HEK293 (cell line): ENCODE measurements at regions of chr7 and their contacts with region 1.

Region 1: DNA sequence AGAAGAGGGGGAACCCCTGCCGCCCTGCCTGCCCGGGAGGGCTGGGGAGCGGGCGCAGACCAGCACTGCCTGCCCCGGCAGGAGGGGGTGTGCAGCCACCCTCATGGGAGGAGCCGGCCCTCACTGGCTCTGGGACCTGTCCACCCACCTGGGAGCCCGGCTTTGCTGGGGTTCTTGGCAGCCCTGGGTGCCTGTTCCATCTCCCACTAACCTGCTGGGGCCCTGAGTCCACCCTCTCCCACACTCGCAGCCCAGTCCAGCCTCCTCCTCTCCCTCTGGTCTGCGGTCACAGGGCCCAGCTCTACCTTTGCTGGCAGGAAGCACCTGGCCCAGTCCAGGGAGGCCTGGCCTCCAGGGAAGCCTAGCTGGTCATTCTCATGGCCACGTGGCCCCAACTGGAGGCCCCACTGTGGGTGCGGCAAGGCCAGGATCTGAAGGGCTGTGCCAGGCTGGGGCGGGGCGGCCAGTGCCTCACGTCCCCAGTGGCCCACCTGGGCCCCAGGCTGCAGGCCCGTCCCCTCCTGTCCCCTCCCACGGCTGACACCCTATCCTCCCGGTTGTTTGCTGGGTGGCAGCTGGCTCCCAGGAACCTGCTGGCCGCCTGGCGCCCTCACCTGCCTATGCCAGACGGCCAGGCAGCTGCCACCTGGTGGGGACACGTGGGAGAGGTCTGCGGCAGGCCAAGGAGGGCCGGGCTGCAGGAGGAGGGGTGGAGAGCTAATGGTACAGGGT is at the start of gene TMEM184A:
- H3K4me3 ChIP-seq: no peak within 1 kb of the TSS
- H3K27ac ChIP-seq: no peak within 1 kb of the TSS; the same call in 1 of the 2 replicates
- H3K4me1 ChIP-seq: peaks cover 3% of the 10 kb centered on the region; the same call in 1 of the 2 replicates
- CTCF ChIP-seq: peak; percentile 90

Region 2: GRCh38 chr7:1144269-1144771 is 411.7 kb before region 1 on chr7:
- CTCF ChIA-PET with region 1: no interaction called
- POLR2A ChIA-PET with region 1: no interaction called
- H3K4me3 ChIP-seq: no peak overlapping the region
- H3K27ac ChIP-seq: no peak overlapping the region
- H3K4me1 ChIP-seq: no peaks in the 10 kb centered on the region
- CTCF ChIP-seq: no peak

Region 3: GRCh38 chr7:1236831-1237701 is 318.9 kb before region 1 on chr7:
- CTCF ChIA-PET with region 1: no interaction called
- POLR2A ChIA-PET with region 1: no interaction called
- H3K4me3 ChIP-seq: no peak overlapping the region
- H3K27ac ChIP-seq: no peak overlapping the region
- H3K4me1 ChIP-seq: no peaks in the 10 kb centered on the region
- CTCF ChIP-seq: no peak

Region 4: DNA sequence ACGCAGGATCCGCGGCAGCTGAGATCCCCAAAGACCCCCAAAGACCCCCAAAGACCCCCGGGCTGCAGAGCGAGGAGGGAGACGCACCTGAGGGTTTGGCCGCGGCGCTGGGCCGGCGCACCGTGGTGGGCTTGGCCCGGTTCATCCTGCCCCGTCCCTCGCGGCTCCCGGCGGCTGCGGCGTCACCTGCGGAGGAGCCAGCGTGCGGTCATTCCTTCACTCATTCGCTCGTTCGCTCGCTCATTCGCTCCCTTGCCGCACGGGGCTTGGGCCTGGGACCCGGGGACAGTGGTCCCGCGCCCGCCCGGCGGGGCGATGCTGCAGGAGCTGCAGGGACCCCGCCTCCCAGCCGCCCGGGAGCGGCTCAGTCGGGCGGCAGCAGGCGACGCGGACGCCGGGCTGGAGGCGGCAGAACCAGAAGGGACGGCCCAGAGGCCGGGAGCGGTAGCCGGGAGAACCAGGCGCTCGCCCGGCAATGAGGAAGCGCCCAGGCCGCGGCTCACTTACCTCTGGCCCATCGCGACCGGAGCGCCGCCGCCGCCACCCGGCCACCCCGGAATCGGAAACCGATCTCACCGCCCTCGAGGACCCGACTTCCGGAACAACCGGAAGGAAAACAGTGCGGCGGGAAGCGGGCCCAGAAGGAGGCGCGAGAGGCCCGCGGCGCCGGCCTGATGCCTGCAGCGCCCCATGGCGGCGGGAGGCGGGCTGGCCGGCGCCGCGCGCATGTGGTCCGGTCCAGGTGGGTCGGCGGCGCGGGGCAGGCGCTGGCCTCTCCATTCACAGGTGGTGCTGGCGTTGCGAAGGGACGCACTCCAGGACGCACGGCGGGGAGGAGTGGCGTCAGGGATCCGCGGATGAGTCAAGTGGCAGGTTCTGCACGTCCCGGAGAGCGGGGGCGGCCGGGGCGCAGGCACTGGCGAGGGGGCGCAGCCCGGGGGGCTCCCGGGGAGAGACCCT is 51.9 kb before region 1 on chr7 and contains the start of gene INTS1:
- CTCF ChIA-PET with region 1: interaction called, 10 read pairs
- POLR2A ChIA-PET with region 1: interaction called, 8 read pairs
- H3K4me3 ChIP-seq: peak within 1 kb of the TSS; percentile 89
- H3K27ac ChIP-seq: peak within 1 kb of the TSS; percentile 78; the same call in 1 of the 2 replicates
- H3K4me1 ChIP-seq: no peaks in the 10 kb centered on the region
- CTCF ChIP-seq: peak; percentile 50

Region 5: GRCh38 chr7:1532483-1533424 is 23.2 kb before region 1 on chr7:
- CTCF ChIA-PET with region 1: interaction called, 23 read pairs
- POLR2A ChIA-PET with region 1: interaction called, 40 read pairs
- H3K4me3 ChIP-seq: peak overlapping the region; percentile 71
- H3K27ac ChIP-seq: peak overlapping the region; percentile 62
- H3K4me1 ChIP-seq: peaks cover 26% of the 10 kb centered on the region
- CTCF ChIP-seq: no peak

Region 6: DNA sequence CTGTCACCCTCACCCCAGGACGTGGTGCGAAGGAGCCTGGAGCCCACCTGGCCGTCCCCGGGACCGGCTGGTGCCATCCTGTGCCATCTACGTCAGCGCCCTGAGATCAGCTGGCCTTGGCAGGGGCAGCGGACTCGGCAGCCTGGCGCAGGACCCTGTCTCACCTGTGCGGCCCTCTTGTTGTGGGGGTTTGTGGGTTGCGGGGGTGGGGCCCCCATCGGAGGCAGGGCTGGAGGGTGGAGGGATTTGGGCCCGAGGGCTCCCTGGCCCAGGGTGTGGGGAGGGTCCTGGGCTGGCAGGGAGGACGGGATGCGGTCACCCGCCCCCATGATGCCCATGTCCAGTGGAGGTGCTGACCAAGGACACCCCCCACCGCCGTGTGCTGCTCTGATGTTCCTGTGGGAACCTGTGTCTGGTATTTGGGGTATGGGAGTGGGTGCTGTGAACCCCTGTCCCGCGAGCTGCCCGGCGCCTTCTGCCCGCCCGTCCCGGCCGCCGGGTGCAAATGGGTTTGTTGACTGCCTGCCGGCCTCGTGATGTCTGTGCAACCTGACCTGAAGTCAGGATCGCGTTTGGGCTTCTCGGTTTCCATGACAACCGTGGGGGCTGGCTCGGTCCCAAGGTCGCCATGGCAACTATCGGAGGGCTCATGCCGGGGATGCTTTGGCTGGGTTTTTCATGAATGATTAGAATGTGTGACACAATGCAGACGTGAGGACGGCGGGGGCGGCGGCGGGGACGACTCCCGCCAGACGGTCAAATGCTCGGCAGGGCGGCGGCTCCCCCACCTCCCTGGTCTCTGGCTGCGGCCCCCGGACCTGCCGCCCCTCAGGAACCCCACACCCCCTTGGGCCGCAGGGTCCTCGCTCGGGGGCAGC is 18.2 kb before region 1 on chr7:
- CTCF ChIA-PET with region 1: interaction called, 23 read pairs
- POLR2A ChIA-PET with region 1: interaction called, 40 read pairs
- H3K4me3 ChIP-seq: peak overlapping the region; percentile 56
- H3K27ac ChIP-seq: peak overlapping the region; percentile 25; the same call in 1 of the 2 replicates
- H3K4me1 ChIP-seq: peaks cover 22% of the 10 kb centered on the region
- CTCF ChIP-seq: no peak

Region 7: GRCh38 chr7:1767524-1767923 is 211.5 kb after region 1 on chr7:
- CTCF ChIA-PET with region 1: no interaction called
- POLR2A ChIA-PET with region 1: no interaction called
- H3K4me3 ChIP-seq: no peak overlapping the region
- H3K27ac ChIP-seq: no peak overlapping the region
- H3K4me1 ChIP-seq: no peaks in the 10 kb centered on the region
- CTCF ChIP-seq: no peak

Region 8: DNA sequence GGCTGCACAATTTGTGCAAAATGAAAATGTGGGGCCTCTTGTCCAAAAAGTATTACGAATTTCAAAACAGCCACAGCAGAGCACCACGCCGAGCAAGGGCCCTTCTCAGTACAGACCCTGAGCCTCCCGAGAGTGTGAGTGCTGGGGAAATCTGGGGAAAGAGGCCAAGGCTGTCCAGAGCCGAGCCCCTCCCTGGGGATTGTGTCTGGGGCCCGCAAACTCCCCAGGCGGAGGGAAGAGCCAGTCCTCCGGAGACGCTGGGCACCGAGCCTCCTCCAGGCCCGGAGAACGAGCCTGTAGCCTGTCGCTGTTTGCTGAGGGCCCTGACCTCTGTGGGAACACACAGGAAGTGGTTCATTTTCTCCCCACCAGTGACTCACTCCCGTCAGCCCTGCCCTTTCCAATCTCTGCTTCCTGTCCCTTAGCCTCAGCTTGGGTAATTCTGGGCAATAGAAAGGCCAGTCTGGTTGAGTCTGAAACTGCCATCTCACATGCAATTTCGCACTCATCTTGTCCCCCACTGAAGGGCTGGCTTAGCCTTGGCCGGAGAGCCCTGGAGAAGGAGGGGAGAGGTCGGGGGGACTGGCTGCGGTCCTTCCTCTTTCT is 1307.6 kb after region 1 on chr7:
- CTCF ChIA-PET with region 1: no interaction called
- POLR2A ChIA-PET with region 1: no interaction called
- H3K4me3 ChIP-seq: no peak overlapping the region
- H3K27ac ChIP-seq: peak overlapping the region; percentile 46; the same call in 1 of the 2 replicates
- H3K4me1 ChIP-seq: no peaks in the 10 kb centered on the region
- CTCF ChIP-seq: no peak